ENCODE measurements at regions of chr1 and their contacts with region 1.

Region 1: DNA sequence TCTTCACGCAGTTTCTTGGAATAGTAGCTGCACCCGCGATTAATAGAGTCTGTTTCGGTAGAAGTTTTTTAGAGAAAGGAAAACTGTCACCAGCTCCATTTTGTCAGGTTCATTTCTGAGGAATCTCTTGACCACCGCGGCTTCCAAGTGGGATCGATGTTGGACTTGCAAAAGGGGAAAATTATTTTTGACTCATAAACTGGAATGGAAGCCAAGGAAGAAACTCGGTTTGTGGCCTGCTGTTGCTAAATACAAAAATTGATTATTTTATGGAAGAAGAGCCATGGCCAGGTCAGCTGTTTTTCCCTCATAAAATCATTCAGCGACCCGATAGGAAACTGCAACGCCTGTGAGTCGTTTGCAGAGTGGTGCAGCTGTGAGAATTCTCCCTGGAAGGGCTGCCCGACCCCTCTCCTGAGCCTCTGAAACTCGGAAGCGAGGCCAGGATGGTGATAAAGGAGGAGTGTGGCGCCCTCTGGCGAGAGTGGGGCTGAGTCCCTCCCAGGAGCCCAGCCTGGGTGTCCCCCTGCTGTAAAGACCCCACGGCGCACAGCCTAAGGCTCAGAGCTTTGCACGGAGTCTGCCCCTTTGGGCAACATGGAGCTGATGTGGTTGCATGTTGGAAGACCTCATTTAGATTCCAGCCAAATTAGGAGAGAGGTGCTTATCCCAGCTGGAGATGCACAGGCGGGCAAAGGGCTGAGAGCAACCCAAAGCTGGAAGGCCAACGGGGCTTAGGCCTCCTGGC is 83.6 kb upstream of the SLC25A33 start:
- DNase-seq: peak; percentile 35
- H3K27ac ChIP-seq: no peak overlapping the region
- CTCF ChIP-seq: peak; percentile 62

Region 2: GRCh38 chr1:9270290-9270883 is 185.3 kb before region 1 on chr1:
- CTCF ChIA-PET with region 1: interaction called, 10 read pairs
- POLR2A ChIA-PET with region 1: no interaction called
- DNase-seq: no peak
- H3K27ac ChIP-seq: peak overlapping the region; percentile 45; the same call in 1 of the 2 replicates
- CTCF ChIP-seq: no peak

Region 3: GRCh38 chr1:9289090-9289534 is 166.5 kb before region 1 on chr1:
- CTCF ChIA-PET with region 1: interaction called, 3 read pairs
- POLR2A ChIA-PET with region 1: interaction called, 11 read pairs
- DNase-seq: no peak
- H3K27ac ChIP-seq: no peak overlapping the region
- CTCF ChIP-seq: peak; percentile 68

Measured in RWPE1 (cell line).